ENCODE measurements at regions of chr22 and their contacts with region 1.

Region 1: DNA sequence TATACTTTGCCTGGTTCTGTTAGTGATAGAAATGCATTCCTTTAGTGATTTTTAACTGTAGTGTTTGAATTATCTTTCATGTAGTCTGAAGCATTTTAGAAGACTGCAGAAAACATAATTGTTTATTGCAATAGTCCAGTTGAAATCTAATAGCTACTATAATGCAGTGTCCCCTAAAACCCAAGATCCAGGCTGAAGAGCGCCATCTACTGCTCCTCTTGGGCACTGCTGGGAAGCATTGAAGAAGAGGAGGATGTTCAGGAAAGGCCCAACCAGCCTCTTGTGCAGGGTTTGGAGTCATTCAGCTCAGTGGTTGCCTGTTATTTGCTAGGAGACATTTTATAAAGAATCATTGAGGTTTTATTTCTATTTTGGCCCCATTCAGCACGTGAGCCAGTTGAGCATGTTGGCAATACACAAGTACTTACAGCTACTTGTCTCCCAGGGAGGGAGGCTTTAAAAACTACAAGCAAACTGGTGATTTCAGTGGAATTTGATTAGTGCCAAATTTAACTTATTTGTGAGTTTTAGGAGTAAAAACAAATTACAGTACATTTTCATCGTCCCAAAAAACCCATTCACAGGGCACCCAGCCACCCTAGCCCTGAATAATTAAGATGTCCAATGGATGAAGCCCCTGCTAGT is 74.9 kb upstream of the HORMAD2 start:
- H3K4me3 ChIP-seq: no peak overlapping the region
- H3K27ac ChIP-seq: no peak overlapping the region
- H3K4me1 ChIP-seq: no peaks in the 10 kb centered on the region
- CTCF ChIP-seq: peak; percentile 71

Region 2: DNA sequence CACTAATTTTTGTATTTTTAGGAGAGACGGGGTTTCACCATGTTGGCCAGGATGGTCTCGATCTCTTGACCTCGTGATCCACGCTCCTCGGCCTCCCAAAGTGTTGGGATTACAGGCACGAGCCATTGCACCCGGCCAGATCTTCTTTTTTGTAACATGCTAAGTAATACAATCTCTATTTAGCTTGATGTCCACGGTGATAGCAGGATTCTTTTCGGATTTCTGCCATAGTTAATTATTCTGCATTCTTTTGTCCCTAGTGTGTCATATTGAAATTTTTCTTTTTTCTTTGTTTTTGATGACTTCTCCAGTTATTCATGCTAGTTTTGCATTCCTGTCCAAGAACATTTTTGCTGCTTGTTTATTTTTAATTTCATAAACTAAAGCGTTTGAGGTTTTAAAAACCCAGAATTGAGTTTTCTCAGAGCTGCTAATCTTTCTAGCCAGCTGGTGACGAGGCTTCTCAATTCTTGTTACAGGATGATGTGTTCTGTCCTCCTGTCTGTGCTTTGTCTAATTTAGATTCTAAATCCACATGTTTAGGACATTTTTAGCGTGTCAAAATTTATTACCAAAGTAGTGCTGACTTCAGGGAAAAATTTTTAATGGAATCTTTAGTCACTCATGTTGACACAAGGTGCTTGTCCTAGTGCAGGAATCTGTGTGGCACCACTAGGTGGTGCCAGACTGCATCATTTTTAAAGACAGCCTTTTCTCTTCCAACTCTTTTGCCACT is 380.1 kb before region 1 on chr22:
- CTCF ChIA-PET with region 1: interaction called, 16 read pairs
- POLR2A ChIA-PET with region 1: no interaction called
- H3K4me3 ChIP-seq: no peak overlapping the region
- H3K27ac ChIP-seq: no peak overlapping the region
- H3K4me1 ChIP-seq: peaks cover 44% of the 10 kb centered on the region
- CTCF ChIP-seq: no peak

Region 3: GRCh38 chr22:29701155-29701999 is 304.0 kb before region 1 on chr22:
- CTCF ChIA-PET with region 1: interaction called, 20 read pairs
- POLR2A ChIA-PET with region 1: no interaction called
- H3K4me3 ChIP-seq: no peak overlapping the region
- H3K27ac ChIP-seq: no peak overlapping the region
- H3K4me1 ChIP-seq: peaks cover 20% of the 10 kb centered on the region
- CTCF ChIP-seq: no peak

Region 4: DNA sequence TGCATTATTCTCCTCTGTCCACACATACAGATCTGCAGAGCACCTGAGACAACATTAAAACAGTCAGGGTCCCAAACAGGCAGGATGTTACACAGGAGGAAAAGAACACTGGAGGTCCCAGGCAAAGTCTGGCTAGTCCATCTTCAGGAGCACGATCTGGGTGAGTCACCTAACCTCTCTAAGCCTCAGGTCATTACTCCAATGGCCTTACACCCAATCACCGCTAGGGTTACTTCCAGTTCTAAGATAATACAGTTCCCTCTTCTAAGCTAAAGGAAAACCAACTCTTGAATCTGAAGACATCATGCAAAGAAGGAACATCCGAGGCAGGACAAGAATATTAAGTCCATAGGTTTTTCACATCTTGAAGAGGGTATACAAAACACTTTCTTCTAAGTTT is 191.8 kb before region 1 on chr22:
- CTCF ChIA-PET with region 1: interaction called, 19 read pairs
- POLR2A ChIA-PET with region 1: no interaction called
- H3K4me3 ChIP-seq: no peak overlapping the region
- H3K27ac ChIP-seq: no peak overlapping the region
- H3K4me1 ChIP-seq: no peaks in the 10 kb centered on the region
- CTCF ChIP-seq: no peak

Region 5: DNA sequence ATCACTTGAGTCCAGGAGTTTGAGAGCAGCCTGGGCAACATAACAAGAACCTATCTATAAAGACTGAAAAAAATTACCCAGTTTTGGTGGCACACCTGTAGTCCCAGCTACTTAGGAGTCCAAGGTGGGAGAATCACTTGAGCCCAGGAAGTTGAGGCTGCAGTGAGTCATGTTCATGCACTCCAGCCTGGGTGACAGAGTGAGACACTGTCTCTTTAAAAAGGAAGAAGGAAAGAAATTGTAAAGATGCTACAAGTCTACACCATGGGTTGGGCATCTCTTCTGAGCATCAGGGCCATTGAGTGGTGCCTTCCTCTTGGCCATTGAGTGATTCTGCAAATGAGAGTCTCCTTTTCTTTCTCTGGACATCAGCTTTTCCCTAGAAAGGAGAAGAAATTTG is 138.1 kb before region 1 on chr22:
- CTCF ChIA-PET with region 1: no interaction called
- POLR2A ChIA-PET with region 1: no interaction called
- H3K4me3 ChIP-seq: no peak overlapping the region
- H3K27ac ChIP-seq: no peak overlapping the region
- H3K4me1 ChIP-seq: peaks cover 6% of the 10 kb centered on the region; the same call in 1 of the 2 replicates
- CTCF ChIP-seq: no peak

Region 6: GRCh38 chr22:29977107-29977506 is 28.2 kb before region 1 on chr22:
- CTCF ChIA-PET with region 1: interaction called, 10 read pairs
- POLR2A ChIA-PET with region 1: no interaction called
- H3K4me3 ChIP-seq: no peak overlapping the region
- H3K27ac ChIP-seq: no peak overlapping the region
- H3K4me1 ChIP-seq: peaks cover 6% of the 10 kb centered on the region
- CTCF ChIP-seq: no peak

Region 7: DNA sequence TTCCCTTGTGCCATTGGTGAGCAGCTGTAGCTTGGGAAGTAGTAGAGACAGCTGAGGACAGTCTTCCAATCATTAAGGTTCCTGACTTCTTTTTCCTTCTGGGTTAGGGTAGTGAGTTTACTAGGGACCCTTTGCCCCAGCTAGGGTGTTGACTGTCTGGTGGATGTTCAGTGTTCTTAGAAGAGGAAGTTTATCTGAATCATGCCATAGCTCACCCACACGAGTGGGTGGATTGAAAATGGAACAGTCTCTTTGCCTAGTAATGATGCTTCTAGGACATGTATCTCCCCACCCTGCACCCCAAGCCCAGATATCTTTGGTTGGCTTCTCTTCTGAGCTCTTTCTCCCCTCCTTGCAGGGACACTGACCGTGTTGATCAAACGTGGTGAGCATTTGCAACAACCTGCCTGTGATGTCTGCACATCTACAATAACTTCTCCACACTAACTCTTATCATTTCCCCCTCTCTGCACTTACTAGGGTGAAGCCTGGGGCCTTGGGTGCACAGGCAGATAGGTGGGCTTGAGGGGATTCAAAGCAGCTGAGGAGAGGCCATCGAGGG is 17.8 kb after region 1 on chr22:
- CTCF ChIA-PET with region 1: interaction called, 40 read pairs
- POLR2A ChIA-PET with region 1: no interaction called
- H3K4me3 ChIP-seq: no peak overlapping the region
- H3K27ac ChIP-seq: no peak overlapping the region
- H3K4me1 ChIP-seq: no peaks in the 10 kb centered on the region
- CTCF ChIP-seq: no peak

Region 8: DNA sequence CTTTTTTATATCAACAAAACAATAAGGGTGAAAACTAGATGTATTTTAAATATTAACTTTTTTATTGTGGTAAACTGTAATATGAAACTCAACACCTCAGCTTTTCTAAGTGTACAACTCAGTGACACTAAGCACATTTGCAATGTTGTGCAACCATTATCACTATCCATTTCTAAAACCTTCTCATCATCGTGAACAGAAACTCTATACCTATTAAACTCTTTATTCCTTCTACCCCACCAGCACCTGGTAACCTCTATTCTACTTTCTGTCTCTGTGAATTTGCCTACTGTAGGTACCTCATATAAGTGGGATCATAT is 84.3 kb after region 1 on chr22:
- CTCF ChIA-PET with region 1: interaction called, 32 read pairs
- POLR2A ChIA-PET with region 1: no interaction called
- H3K4me3 ChIP-seq: no peak overlapping the region
- H3K27ac ChIP-seq: no peak overlapping the region
- H3K4me1 ChIP-seq: no peaks in the 10 kb centered on the region
- CTCF ChIP-seq: no peak